Heart left ventricle (tissue), 16 donors: ENCODE measurements at regions of chr1 and their contacts with region 1.

Region 1: DNA sequence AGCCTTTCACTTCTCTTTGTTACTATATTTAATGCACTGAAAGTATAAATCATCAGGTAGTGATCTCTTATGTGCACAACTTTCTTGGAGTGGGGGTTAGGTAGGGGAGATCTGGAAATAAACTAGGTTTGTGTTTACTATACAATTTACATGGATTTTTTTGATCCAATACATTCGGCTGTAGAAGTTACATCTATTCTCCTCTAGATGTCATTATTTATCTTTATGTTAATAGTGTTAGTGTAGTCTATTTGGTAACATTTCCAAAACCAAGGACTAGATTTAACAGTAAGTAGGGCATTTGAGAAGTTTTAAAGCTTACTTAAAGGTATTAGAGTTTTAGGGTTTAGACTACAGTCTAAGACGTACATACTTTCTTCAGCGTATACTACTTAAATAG is 5.4 kb downstream of the VPS45 start:
- DNase-seq: no peak
- ATAC-seq: peak in 2 of 4 donors; percentile 47 to 56
- H3K4me3 ChIP-seq: no peak overlapping the region
- H3K27ac ChIP-seq: no peak overlapping the region
- H3K4me1 ChIP-seq: peaks cover 0 to 19% (median 10%) of the 10 kb centered on the region in 12 donors
- H3K27me3 ChIP-seq: no peaks in the 10 kb centered on the region
- CTCF ChIP-seq: peak; percentile 26 to 66 (median 50)
- POLR2A ChIP-seq: no peak

Region 2: GRCh38 chr1:149937060-149937705 is 135.8 kb before region 1 on chr1:
- intact Hi-C with region 1: no loop called
- DNase-seq: no peak
- ATAC-seq: no peak
- H3K4me3 ChIP-seq: peak overlapping the region; percentile 22 to 73 (median 55)
- H3K27ac ChIP-seq: peak overlapping the region in 9 of 12 donors; percentile 10 to 88 (median 59)
- H3K4me1 ChIP-seq: peaks cover 0 to 45% (median 35%) of the 10 kb centered on the region in 12 donors
- H3K27me3 ChIP-seq: no peaks in the 10 kb centered on the region
- CTCF ChIP-seq: no peak
- POLR2A ChIP-seq: no peak

Region 3: GRCh38 chr1:150118716-150119115 is 45.8 kb after region 1 on chr1:
- intact Hi-C with region 1: no loop called
- DNase-seq: no peak
- ATAC-seq: no peak
- H3K4me3 ChIP-seq: no peak overlapping the region
- H3K27ac ChIP-seq: no peak overlapping the region
- H3K4me1 ChIP-seq: peaks cover 0 to 5% (median 0%) of the 10 kb centered on the region in 12 donors
- H3K27me3 ChIP-seq: no peaks in the 10 kb centered on the region
- CTCF ChIP-seq: no peak
- POLR2A ChIP-seq: no peak

Region 4: DNA sequence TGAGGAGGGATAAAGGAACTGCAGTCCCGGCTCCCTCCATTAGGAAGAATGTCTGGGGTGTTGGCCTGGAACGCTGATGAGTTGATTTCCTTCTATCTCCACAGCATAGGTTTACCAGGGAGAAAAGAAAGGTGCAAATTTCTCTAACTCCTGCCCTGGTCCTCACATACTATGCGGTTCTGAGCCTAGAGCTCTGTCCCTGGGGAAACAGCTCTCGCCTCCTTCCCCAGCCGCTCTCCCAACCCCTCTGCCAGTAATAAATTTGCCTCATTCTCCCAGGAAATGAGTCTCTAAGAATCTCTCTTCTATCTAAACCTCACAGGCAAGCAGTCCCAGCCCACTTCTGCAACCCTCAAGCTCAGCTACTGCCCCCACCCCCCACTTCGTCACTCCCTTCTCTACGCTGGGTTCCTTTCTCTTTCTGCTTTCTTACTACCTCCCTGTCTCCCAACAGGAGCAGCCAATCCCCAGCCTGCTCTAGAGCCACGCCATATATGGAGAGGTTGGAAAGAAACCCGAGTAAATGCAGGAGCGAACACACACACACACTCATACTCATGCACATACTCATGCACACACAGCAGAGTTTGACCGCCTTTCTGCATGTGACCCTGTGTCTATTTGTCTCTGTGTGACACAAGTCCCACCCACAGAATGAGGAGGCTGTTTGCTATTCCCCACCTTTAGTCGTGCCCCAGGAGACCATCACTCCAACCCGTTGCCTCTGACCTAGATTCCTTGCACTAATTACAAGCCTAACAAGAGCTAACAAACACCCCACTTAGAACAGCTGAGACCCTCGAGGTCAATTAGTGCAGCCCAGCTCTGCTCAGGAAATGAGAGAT is 90.1 kb after region 1 on chr1:
- intact Hi-C with region 1: loop called in 9 of 10 experiments (anchors 1 to 5 kb)
- DNase-seq: peak; percentile 83 to 91 (median 89)
- ATAC-seq: peak; percentile 84 to 94 (median 92)
- H3K4me3 ChIP-seq: peak overlapping the region in 9 of 12 donors; percentile 24 to 55 (median 38)
- H3K27ac ChIP-seq: peak overlapping the region; percentile 43 to 98 (median 90)
- H3K4me1 ChIP-seq: peaks cover 0 to 82% (median 33%) of the 10 kb centered on the region in 12 donors
- H3K27me3 ChIP-seq: no peaks in the 10 kb centered on the region
- CTCF ChIP-seq: no peak
- POLR2A ChIP-seq: peak in 1 of 2 donors; percentile 70

Region 5: DNA sequence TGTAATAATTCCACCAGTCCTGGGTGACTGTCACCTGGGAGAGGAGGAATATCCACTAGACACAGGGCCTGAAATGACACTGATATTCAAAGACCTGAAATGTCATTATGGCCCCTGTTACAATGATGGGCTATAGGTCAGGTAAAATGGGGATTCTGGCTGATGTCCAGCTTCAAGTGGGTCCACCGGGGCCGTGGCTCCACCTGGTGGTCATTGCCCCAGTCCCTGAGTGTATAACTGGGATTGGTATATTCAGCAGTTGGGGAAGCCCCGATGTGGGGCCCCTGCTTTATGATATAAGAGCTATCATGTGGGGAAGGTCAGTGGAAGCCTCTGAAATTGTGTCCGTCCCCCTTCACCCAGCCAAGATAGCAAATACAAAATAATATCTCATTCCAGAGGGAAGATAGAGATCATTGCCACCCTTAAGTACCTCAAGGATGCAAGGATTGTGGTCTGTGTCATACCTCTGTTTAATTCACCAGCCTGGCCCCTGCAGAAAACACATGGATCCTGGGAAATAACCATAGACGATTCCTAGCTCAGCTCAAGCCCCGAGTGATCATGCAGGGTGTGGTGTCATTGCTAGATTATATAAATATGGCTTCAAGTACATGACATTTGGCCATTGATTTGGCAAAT is 96.1 kb after region 1 on chr1:
- intact Hi-C with region 1: loop called (anchors 1 to 5 kb)
- DNase-seq: peak; percentile 66 to 85 (median 72)
- ATAC-seq: peak in 3 of 4 donors; percentile 69 to 78 (median 70)
- H3K4me3 ChIP-seq: no peak overlapping the region
- H3K27ac ChIP-seq: no peak overlapping the region
- H3K4me1 ChIP-seq: peaks cover 0 to 28% (median 7%) of the 10 kb centered on the region in 12 donors
- H3K27me3 ChIP-seq: no peaks in the 10 kb centered on the region
- CTCF ChIP-seq: peak; percentile 73 to 92 (median 82)
- POLR2A ChIP-seq: no peak